ENCODE measurements at regions of chr5 and their contacts with region 1.

Region 1: GRCh38 chr5:133846478-133847226 is 121.8 kb downstream of the C5orf15 start:
- DNase-seq: no peak
- H3K4me3 ChIP-seq: no peak overlapping the region
- H3K27ac ChIP-seq: no peak overlapping the region
- H3K4me1 ChIP-seq: no peaks in the 10 kb centered on the region
- H3K27me3 ChIP-seq: peaks cover 0 to 1% of the 10 kb centered on the region in 2 experiments
- CTCF ChIP-seq: no peak
- POLR2A ChIP-seq: no peak

Region 2: DNA sequence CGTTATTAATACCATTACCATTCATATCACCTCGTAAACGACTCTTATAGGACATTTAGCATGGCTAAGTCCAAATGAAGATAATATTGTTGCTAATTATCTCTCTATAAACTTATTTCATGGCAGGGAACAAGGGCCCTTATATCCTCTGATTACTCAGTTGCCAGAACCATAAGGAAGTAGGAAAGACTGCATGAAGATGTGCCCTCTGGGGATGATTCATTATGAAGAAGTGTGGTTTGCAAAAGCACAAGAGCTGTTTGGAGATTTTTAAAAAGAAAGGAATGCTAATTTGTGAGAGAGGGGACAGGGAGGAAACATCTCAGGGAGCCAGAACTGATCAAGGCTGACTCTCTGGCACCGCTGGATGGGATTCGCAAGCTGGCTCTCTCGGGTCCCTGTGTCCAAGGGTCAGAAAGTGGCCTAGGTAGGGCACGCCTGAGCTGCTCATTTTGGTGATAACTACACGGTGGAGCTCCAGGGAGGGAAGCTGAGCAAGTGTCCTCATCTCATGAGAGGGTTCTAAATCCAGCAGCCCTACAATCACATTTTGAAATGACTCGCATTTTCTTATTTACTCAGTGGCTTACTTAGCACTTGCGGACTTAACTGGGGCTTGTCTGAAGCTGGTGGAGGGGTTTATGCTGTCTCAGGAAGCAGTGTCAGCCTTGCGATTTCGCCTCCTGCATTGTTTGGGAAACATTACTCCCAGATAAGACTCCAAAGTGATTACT is 15.0 kb before region 1 on chr5:
- CTCF ChIA-PET with region 1: interaction called, 10 read pairs
- POLR2A ChIA-PET with region 1: no interaction called
- dilution Hi-C with region 1: no loop called
- intact Hi-C with region 1: no loop called
- DNase-seq: peak; percentile 92
- H3K4me3 ChIP-seq: peak overlapping the region in 1 of 3 experiments; percentile 29
- H3K27ac ChIP-seq: peak overlapping the region; percentile 83
- H3K4me1 ChIP-seq: peaks cover 23% of the 10 kb centered on the region
- H3K27me3 ChIP-seq: no peaks in the 10 kb centered on the region
- CTCF ChIP-seq: no peak
- POLR2A ChIP-seq: peak; percentile 40

Region 3: DNA sequence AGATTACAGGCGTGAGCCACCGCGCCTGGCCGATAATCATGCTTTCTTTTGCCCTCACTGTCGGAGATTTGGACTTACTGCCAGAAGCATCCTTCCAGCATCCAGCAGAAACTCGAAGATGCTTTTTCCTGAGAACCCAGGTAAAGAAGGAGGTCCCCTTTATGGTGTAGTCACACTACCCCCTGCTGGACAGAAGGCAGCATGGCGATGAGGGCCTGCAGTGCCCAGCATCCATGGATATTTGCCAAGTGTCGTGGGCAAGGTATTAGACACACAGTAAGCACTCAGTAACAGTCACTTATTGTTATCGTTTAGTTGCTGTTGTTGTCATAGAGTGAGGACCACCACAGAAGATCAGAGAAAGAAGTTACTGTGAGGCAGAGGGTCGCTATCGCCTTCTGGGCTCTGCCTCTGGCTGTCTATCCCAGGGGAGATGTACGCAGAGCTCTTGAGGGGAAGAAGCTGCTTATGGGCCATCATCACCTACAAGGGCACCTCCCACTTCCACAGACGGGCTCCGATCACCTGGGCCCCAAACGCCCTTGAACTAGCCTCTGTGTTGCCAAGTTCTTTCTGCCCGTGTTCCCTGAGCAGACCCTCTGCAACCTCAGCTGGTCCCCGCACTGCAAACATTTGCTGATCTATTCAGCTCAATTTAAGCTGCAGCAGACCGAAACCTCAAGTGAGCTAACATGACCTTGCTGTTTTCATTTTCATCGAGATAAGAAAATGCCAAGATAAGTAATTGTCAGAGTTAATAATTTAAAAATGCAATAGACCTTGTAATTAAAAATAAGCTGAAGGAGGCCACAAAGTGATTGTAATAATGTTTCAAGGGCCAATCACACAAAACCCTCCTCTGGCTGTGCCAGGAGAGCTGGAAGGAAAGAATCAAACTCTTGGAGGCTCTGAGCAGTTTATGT is 97.9 kb after region 1 on chr5:
- CTCF ChIA-PET with region 1: no interaction called
- POLR2A ChIA-PET with region 1: no interaction called
- dilution Hi-C with region 1: no loop called
- intact Hi-C with region 1: no loop called
- DNase-seq: peak; percentile 53
- H3K4me3 ChIP-seq: no peak overlapping the region
- H3K27ac ChIP-seq: no peak overlapping the region
- H3K4me1 ChIP-seq: no peaks in the 10 kb centered on the region
- H3K27me3 ChIP-seq: no peaks in the 10 kb centered on the region
- CTCF ChIP-seq: peak; percentile 79
- POLR2A ChIP-seq: no peak

Measured in endothelial cell of umbilical vein (primary cell).